Gastrocnemius medialis (tissue), 4 donors: ENCODE measurements at regions of chr12 and their contacts with region 1.

Region 1: GRCh38 chr12:12724661-12725545 is 7.7 kb downstream of the CDKN1B start:
- DNase-seq: peak; percentile 89 to 95
- ATAC-seq: peak; percentile 90 to 91
- H3K4me3 ChIP-seq: peak overlapping the region; percentile 66 to 88 (median 80)
- H3K27ac ChIP-seq: peak overlapping the region; percentile 96 to 99 (median 98)
- H3K4me1 ChIP-seq: peaks cover 36 to 37% of the 10 kb centered on the region in 2 donors
- H3K27me3 ChIP-seq: no peaks in the 10 kb centered on the region
- CTCF ChIP-seq: peak in 2 of 5 experiments; percentile 9 to 39
- POLR2A ChIP-seq: peak; percentile 85 to 91

Region 2: DNA sequence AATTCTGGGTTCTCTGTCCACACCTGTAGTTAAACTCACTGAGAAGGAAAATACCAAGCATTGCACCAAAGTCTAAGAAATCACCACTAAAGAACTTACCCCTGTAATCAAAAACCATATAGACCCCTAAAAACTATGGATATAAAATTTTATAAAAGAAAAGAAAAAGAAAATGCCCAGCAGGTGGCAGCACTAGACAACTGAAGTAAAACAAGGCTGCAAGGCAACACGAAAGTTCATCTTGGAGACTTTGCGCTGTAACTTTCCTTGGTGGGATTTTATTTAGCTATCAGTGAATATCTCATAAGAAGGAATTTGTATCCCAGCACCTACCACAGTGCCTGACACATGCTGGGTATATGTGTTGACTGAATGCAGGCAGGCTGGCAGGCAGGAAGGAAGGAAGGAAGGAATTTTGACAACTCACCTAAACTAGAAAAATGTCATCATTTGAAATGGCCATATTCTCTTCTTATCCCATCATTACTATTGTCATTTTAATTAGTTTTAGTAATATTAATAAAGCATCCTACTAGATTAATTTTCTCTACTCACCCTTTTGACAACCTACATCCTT is 1143.6 kb before region 1 on chr12:
- in situ Hi-C with region 1: no loop called
- intact Hi-C with region 1: no loop called
- DNase-seq: peak; percentile 23 to 24
- ATAC-seq: peak in 1 of 2 donors; percentile 36
- H3K4me3 ChIP-seq: no peak overlapping the region
- H3K27ac ChIP-seq: no peak overlapping the region
- H3K4me1 ChIP-seq: no peaks in the 10 kb centered on the region
- H3K27me3 ChIP-seq: peaks cover 0 to 3% (median 0%) of the 10 kb centered on the region in 3 donors
- CTCF ChIP-seq: peak; percentile 62 to 78 (median 71)
- POLR2A ChIP-seq: no peak

Region 3: DNA sequence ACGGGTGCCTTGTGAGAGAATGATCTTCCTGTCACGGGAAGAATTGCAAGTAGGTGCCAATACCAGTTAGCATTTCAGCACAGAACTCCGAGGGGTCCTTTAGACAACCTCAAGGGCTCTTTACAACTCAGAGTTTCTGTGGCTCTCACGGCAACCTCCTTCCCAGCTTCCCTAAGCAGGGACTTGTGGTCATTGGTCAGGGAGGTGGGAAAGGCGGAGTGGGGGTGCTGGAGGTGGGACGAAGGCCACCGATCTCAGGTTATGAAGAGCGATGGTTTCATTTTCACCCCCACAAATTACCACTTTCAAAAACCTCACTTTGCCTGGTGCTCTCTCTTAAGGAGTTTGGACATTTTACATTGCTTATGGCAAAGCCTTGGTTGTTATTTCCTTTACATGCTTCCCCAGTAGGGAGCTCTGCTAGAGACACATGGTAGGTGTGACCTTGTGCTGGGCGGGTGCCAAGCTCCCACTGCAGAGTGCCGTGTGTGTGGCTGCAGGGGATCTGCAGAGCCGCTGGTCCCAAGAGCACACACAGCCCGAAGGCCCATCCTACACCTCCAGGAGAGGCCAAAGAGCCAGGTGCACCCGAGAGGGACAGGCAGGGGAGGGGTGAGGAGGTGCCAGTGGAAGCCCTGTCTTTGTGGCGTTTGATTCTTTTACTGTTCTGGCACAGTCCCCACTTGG is 632.8 kb before region 1 on chr12:
- in situ Hi-C with region 1: no loop called
- intact Hi-C with region 1: no loop called
- DNase-seq: no peak
- ATAC-seq: no peak
- H3K4me3 ChIP-seq: no peak overlapping the region
- H3K27ac ChIP-seq: no peak overlapping the region
- H3K4me1 ChIP-seq: no peaks in the 10 kb centered on the region
- H3K27me3 ChIP-seq: no peaks in the 10 kb centered on the region
- CTCF ChIP-seq: no peak
- POLR2A ChIP-seq: no peak

Region 4: GRCh38 chr12:12356886-12357718 is 367.8 kb before region 1 on chr12 and contains the start of gene BORCS5:
- in situ Hi-C with region 1: loop called in 1 of 4 experiments (anchors 25 kb)
- intact Hi-C with region 1: no loop called
- DNase-seq: peak; percentile 92 to 96
- ATAC-seq: peak; percentile 95 to 96
- H3K4me3 ChIP-seq: peak within 1 kb of the TSS; percentile 79 to 97 (median 94)
- H3K27ac ChIP-seq: peak within 1 kb of the TSS; percentile 96 to 99 (median 98)
- H3K4me1 ChIP-seq: peaks cover 15 to 16% of the 10 kb centered on the region in 2 donors
- H3K27me3 ChIP-seq: no peaks in the 10 kb centered on the region
- CTCF ChIP-seq: peak in 3 of 5 experiments; percentile 8 to 29 (median 25)
- POLR2A ChIP-seq: peak; percentile 96 to 98
- total RNA-seq, gene BORCS5: 13.0 to 13.9 (median 13.4) TPM

Region 5: GRCh38 chr12:14443531-14443930 is 1718.6 kb after region 1 on chr12:
- in situ Hi-C with region 1: no loop called
- intact Hi-C with region 1: loop called (anchors 5 kb)
- DNase-seq: no peak
- ATAC-seq: peak; percentile 85 to 98
- H3K4me3 ChIP-seq: no peak overlapping the region
- H3K27ac ChIP-seq: peak overlapping the region; percentile 71 to 79 (median 78)
- H3K4me1 ChIP-seq: peaks cover 24 to 30% of the 10 kb centered on the region in 2 donors
- H3K27me3 ChIP-seq: no peaks in the 10 kb centered on the region
- CTCF ChIP-seq: no peak
- POLR2A ChIP-seq: no peak